ENCODE measurements at regions of chr14 and their contacts with region 1.

Region 1: GRCh38 chr14:77457522-77458290 is at the starts of genes AHSA1 and VIPAS39:
- DNase-seq: peak; percentile 97
- H3K4me3 Mint-ChIP-seq: peak within 1 kb of the TSS; percentile 100
- H3K27ac Mint-ChIP-seq: peak within 1 kb of the TSS; percentile 98
- H3K4me1 Mint-ChIP-seq: peaks cover 35% of the 10 kb centered on the region
- H3K27me3 Mint-ChIP-seq: no peaks in the 10 kb centered on the region
- total RNA-seq, gene AHSA1: 253 to 269 TPM
- total RNA-seq, gene VIPAS39: 14.9 to 16.8 TPM

Region 2: GRCh38 chr14:76812211-76813044 is 645.3 kb before region 1 on chr14 and contains the start of gene ANGEL1:
- CTCF ChIA-PET with region 1: no interaction called
- POLR2A ChIA-PET with region 1: no interaction called
- intact Hi-C with region 1: loop called (anchors 5 kb)
- DNase-seq: peak; percentile 98
- H3K4me3 Mint-ChIP-seq: peak within 1 kb of the TSS; percentile 92
- H3K27ac Mint-ChIP-seq: peak within 1 kb of the TSS; percentile 80
- H3K4me1 Mint-ChIP-seq: peaks cover 19% of the 10 kb centered on the region
- H3K27me3 Mint-ChIP-seq: no peaks in the 10 kb centered on the region
- total RNA-seq, gene ANGEL1: 14.6 to 15.9 TPM

Region 3: GRCh38 chr14:77097700-77098528 is 359.8 kb before region 1 on chr14 and contains the start of gene CIPC:
- CTCF ChIA-PET with region 1: no interaction called
- POLR2A ChIA-PET with region 1: interaction called, 3 read pairs
- intact Hi-C with region 1: loop called (anchors 1 kb)
- DNase-seq: peak; percentile 100
- H3K4me3 Mint-ChIP-seq: peak within 1 kb of the TSS; percentile 85
- H3K27ac Mint-ChIP-seq: peak within 1 kb of the TSS; percentile 84
- H3K4me1 Mint-ChIP-seq: peaks cover 36% of the 10 kb centered on the region
- H3K27me3 Mint-ChIP-seq: no peaks in the 10 kb centered on the region
- total RNA-seq, gene CIPC: 7.3 to 7.5 TPM

Region 4: GRCh38 chr14:77301103-77301502 is 156.6 kb before region 1 on chr14:
- CTCF ChIA-PET with region 1: interaction called, 6 read pairs
- POLR2A ChIA-PET with region 1: interaction called, 5 read pairs
- intact Hi-C with region 1: loop called (anchors 1 kb)
- DNase-seq: peak; percentile 78
- H3K4me3 Mint-ChIP-seq: no peak overlapping the region
- H3K27ac Mint-ChIP-seq: no peak overlapping the region
- H3K4me1 Mint-ChIP-seq: peaks cover 24% of the 10 kb centered on the region
- H3K27me3 Mint-ChIP-seq: no peaks in the 10 kb centered on the region

Region 5: DNA sequence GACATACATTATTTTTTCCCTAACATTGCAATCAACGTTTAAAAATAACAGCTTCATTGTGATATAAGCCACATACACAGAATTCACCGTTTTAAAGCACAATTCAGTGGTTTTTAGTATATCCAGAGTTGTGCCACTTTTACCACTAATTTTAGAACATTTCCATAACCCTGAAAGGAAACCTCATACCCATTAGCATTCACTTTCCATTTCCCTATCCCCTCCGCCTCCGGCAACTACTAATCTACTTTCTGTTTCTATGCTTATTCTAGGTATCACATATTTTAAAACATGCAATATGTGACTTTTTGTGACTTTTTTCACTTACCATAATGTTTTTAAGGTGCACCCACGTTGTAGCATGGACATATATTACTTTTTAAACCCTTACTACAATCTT is 96.5 kb after region 1 on chr14:
- CTCF ChIA-PET with region 1: interaction called, 22 read pairs
- POLR2A ChIA-PET with region 1: no interaction called
- intact Hi-C with region 1: loop called (anchors 1 kb)
- DNase-seq: no peak
- H3K4me3 Mint-ChIP-seq: no peak overlapping the region
- H3K27ac Mint-ChIP-seq: peak overlapping the region; percentile 18
- H3K4me1 Mint-ChIP-seq: peaks cover 9% of the 10 kb centered on the region
- H3K27me3 Mint-ChIP-seq: no peaks in the 10 kb centered on the region

Region 6: DNA sequence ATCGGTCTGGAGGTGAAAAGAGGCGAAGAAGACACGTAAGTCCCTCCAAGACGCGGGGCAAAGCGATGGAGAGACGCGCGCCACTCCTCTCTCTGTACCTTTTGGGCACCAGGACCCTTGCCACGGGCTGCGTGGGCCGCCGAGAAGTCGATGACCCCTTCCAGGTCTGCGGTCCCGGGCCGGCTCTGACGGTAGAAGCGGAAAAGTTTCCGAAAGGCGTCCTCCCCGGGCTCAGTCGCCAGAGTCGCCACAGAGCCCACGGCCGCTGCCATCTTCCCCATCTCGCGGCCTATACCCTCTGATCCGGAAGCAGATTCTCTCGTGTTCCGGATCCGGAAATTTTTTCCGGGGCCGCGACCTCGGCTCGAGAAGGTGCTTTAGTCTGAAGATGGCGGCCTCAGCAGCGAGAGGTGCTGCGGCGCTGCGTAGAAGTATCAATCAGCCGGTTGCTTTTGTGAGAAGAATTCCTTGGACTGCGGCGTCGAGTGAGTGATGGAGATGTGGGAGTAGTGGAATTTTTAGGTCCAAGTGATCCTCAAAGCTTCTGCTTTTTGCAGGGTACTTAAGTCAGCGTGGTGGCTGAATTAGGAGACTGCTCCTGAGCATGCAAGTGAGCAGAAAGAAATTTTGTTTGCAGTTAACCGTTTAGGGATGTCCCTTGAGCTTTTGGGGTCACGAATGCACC is 250.2 kb after region 1 on chr14 and contains the starts of genes ALKBH1 and SLIRP:
- CTCF ChIA-PET with region 1: interaction called, 10 read pairs
- POLR2A ChIA-PET with region 1: no interaction called
- intact Hi-C with region 1: loop called (anchors 1 kb)
- DNase-seq: peak; percentile 93
- H3K4me3 Mint-ChIP-seq: peak within 1 kb of the TSS; percentile 90
- H3K27ac Mint-ChIP-seq: peak within 1 kb of the TSS; percentile 86
- H3K4me1 Mint-ChIP-seq: peaks cover 45% of the 10 kb centered on the region
- H3K27me3 Mint-ChIP-seq: no peaks in the 10 kb centered on the region
- total RNA-seq, gene ALKBH1: 13.2 to 16.1 TPM
- total RNA-seq, gene SLIRP: 138 to 146 TPM

Region 7: GRCh38 chr14:77862154-77862786 is 404.6 kb after region 1 on chr14:
- CTCF ChIA-PET with region 1: no interaction called
- POLR2A ChIA-PET with region 1: no interaction called
- intact Hi-C with region 1: no loop called
- DNase-seq: peak; percentile 82
- H3K4me3 Mint-ChIP-seq: no peak overlapping the region
- H3K27ac Mint-ChIP-seq: no peak overlapping the region
- H3K4me1 Mint-ChIP-seq: no peaks in the 10 kb centered on the region
- H3K27me3 Mint-ChIP-seq: no peaks in the 10 kb centered on the region

Region 8: DNA sequence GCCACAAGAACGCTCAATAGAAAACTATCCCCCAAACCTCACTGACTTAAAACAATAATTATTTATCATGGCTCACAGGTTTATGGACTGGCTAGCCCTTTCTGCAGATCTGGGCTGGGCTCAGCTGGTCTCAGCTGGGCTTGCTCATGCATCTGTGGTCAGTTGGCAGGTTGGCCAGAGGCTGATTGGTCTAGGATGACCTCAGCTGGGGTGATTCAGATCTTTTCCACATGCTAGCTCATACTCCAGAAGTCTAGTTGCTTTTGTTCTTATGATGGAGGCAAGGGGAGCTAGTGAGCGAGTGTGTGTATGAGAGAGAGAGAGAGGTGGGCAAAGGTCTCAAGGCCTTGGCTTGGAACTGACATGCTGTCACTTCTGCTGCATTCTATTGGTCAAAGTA is 531.3 kb after region 1 on chr14:
- CTCF ChIA-PET with region 1: no interaction called
- POLR2A ChIA-PET with region 1: no interaction called
- intact Hi-C with region 1: no loop called
- DNase-seq: no peak
- H3K4me3 Mint-ChIP-seq: no peak overlapping the region
- H3K27ac Mint-ChIP-seq: no peak overlapping the region
- H3K4me1 Mint-ChIP-seq: no peaks in the 10 kb centered on the region
- H3K27me3 Mint-ChIP-seq: peaks cover 2% of the 10 kb centered on the region

Measured in activated CD4-positive, alpha-beta memory T cell treated with anti-CD3 and anti-CD28 coated beads for 36 hours (primary cell).